ENCODE measurements at regions of chr2 and their contacts with region 1.

Region 1: GRCh38 chr2:113370478-113371091 is 66.9 kb upstream of the ZNG1B start:
- DNase-seq: peak; percentile 65
- ATAC-seq: peak; percentile 97
- H3K4me3 ChIP-seq: no peak overlapping the region
- H3K27ac ChIP-seq: no peak overlapping the region
- H3K4me1 ChIP-seq: peaks cover 0 to 4% of the 10 kb centered on the region in 2 experiments; a peak in 1 of 4 replicates
- H3K27me3 ChIP-seq: no peaks in the 10 kb centered on the region
- CTCF ChIP-seq: peak; percentile 55 to 97 (median 68)
- POLR2A ChIP-seq: no peak
- RAD21 ChIP-seq: peak; percentile 97

Region 2: DNA sequence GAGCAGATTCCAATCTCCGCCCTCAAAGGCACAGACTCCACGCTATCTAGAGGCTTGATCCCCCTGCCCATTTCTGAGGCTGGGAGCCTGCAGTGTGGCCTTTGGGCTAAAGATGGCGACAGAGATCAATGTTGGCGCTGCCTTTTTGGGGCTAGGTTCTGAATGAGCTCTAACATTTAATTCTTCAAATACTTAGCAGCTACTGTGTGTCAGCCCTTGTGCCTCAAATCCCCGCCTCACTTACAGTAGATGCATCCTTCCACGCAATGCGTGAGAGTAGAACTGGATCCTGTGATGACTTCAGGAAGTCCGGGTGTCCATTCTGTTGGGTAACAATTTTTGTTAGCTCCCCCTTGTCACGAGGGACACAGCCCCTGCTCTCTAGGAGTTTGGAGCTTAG is 290.5 kb before region 1 on chr2:
- CTCF ChIA-PET with region 1: no interaction called
- POLR2A ChIA-PET with region 1: no interaction called
- RAD21 ChIA-PET with region 1: no interaction called
- intact Hi-C with region 1: loop called (anchors 1 kb)
- DNase-seq: peak; percentile 13
- ATAC-seq: peak; percentile 86
- H3K4me3 ChIP-seq: no peak overlapping the region
- H3K27ac ChIP-seq: no peak overlapping the region
- H3K4me1 ChIP-seq: peaks cover 12 to 26% of the 10 kb centered on the region in 2 experiments
- H3K27me3 ChIP-seq: no peaks in the 10 kb centered on the region
- CTCF ChIP-seq: peak; percentile 79 to 91 (median 85)
- POLR2A ChIP-seq: no peak
- RAD21 ChIP-seq: peak; percentile 87

Region 3: GRCh38 chr2:113240150-113240862 is 130.3 kb before region 1 on chr2:
- CTCF ChIA-PET with region 1: interaction called, 12 read pairs
- POLR2A ChIA-PET with region 1: no interaction called
- RAD21 ChIA-PET with region 1: no interaction called
- intact Hi-C with region 1: no loop called
- DNase-seq: peak; percentile 55
- ATAC-seq: peak; percentile 50
- H3K4me3 ChIP-seq: peak overlapping the region in 1 of 2 experiments; percentile 38; a peak in 3 of 4 replicates
- H3K27ac ChIP-seq: peak overlapping the region; percentile 95
- H3K4me1 ChIP-seq: peaks cover 53 to 65% of the 10 kb centered on the region in 2 experiments
- H3K27me3 ChIP-seq: no peaks in the 10 kb centered on the region
- CTCF ChIP-seq: 0 out of 6 replicates have a peak, but pooled peaks of 1 of the 3 experiments have one; percentile 10
- POLR2A ChIP-seq: peak; percentile 7
- RAD21 ChIP-seq: no peak

Region 4: GRCh38 chr2:113248997-113249770 is 121.4 kb before region 1 on chr2:
- CTCF ChIA-PET with region 1: interaction called, 11 read pairs
- POLR2A ChIA-PET with region 1: no interaction called
- RAD21 ChIA-PET with region 1: interaction called in 1 of 2 experiments, 9 read pairs
- intact Hi-C with region 1: loop called (anchors 1 kb)
- DNase-seq: peak; percentile 51
- ATAC-seq: peak; percentile 94
- H3K4me3 ChIP-seq: no peak overlapping the region
- H3K27ac ChIP-seq: peak overlapping the region; percentile 20
- H3K4me1 ChIP-seq: peaks cover 0 to 21% of the 10 kb centered on the region in 2 experiments; a peak in 1 of 4 replicates
- H3K27me3 ChIP-seq: no peaks in the 10 kb centered on the region
- CTCF ChIP-seq: peak in 2 of 3 experiments; percentile 91 to 97; a peak in 4 of 6 replicates
- POLR2A ChIP-seq: no peak
- RAD21 ChIP-seq: no peak